ENCODE measurements at regions of chr19 and their contacts with region 1.

Region 1: DNA sequence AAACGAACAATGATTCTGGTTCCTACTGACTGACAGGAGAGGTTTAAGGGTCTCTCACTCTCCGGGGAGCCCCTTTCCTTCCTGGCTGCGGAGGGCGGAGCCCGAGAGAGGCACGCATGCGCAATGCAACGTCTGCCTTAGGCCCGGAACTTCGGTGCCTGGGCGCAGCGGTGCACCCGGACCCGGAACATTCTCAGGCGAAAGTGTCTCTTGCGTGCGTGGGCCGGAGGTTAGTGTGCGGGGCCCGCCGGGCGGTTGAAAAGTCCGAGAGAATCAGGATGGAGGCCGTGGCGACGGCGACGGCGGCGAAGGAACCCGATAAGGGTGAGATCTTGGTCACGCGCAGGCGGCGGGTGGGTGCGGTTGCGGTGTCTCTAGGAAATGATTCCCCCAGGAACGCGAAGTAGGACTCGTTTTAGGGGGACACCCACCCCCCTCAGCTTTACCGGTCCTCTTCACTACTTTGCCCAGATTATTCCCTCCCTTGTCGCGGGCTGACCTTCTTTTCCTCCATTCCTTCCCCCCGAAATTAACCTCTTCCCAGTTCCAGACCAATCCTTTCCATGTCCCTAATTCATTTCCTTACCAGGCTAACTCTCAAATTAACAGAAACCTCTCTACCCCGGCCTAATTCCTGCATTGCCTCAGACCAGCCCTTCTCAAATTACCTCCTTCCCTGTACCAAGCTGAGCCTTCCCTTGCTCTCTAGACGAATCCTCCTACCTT is at the start of gene CCDC97:
- DNase-seq: peak; percentile 86 to 92 (median 89)
- H3K4me3 ChIP-seq: peak within 1 kb of the TSS; percentile 82 to 98
- H3K4me3 Mint-ChIP-seq: peak within 1 kb of the TSS; percentile 96 to 100 (median 97)
- H3K27ac ChIP-seq: peak within 1 kb of the TSS; percentile 92
- H3K27ac Mint-ChIP-seq: peak within 1 kb of the TSS; percentile 97 to 100 (median 99)
- H3K4me1 ChIP-seq: peaks cover 76% of the 10 kb centered on the region
- H3K4me1 Mint-ChIP-seq: peaks cover 43 to 87% (median 68%) of the 10 kb centered on the region in 4 donors
- H3K27me3 ChIP-seq: no peaks in the 10 kb centered on the region
- H3K27me3 Mint-ChIP-seq: no peaks in the 10 kb centered on the region
- total RNA-seq, gene CCDC97: 56.4 to 61.4 TPM

Region 2: GRCh38 chr19:41123716-41124294 is 186.4 kb before region 1 on chr19:
- CTCF ChIA-PET with region 1: no interaction called
- POLR2A ChIA-PET with region 1: interaction called, 3 read pairs
- intact Hi-C with region 1: loop called (anchors 1 kb)
- DNase-seq: no peak
- H3K4me3 ChIP-seq: no peak overlapping the region
- H3K4me3 Mint-ChIP-seq: peak overlapping the region in 1 of 8 donors; percentile 9
- H3K27ac ChIP-seq: no peak overlapping the region
- H3K27ac Mint-ChIP-seq: peak overlapping the region in 6 of 7 donors; percentile 47 to 94 (median 92)
- H3K4me1 ChIP-seq: peaks cover 33% of the 10 kb centered on the region
- H3K4me1 Mint-ChIP-seq: peaks cover 27 to 54% (median 40%) of the 10 kb centered on the region in 4 donors
- H3K27me3 ChIP-seq: no peaks in the 10 kb centered on the region
- H3K27me3 Mint-ChIP-seq: peaks cover 0 to 4% of the 10 kb centered on the region in 2 donors

Region 3: DNA sequence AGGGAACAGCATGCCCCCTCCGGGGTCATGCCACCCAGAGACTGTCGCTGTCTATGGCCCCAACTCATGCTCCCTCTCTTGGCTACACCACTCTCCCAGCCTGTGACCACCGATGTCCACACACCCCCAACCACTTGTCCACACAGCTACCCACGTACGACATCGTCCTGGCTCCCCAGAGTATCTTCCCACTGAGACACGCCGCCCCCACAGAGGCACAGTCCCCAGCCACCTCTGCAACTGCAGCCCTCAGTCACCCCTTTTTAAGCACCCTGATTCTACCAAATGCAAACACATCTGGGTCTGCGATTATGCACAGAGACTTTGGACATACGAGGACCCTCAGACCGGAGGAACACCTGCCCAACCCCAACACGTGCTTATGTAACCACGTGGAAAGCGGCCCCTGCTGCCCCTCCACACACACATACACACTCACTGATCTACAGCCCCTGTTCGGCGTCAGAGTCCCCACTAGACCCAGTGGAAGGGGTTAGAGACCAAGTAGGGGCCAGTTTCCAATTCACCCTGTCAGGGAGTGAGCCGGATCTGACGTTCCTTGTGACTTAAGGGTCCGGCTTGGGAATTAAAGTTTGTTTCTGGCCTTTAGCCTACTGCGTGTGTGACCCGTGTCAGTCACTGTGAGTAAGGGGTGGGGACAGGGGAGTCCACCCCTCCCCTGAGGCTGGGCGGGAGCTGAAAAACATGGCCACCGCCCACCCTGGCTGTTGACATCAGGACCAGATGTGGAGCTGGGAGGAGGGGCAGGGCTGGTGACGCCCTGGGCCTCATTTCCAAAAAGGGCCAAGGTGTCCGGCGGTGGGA is 103.1 kb before region 1 on chr19:
- CTCF ChIA-PET with region 1: interaction called, 101 read pairs
- POLR2A ChIA-PET with region 1: interaction called, 108 read pairs
- intact Hi-C with region 1: loop called (anchors 1 kb)
- DNase-seq: no peak
- H3K4me3 ChIP-seq: no peak overlapping the region
- H3K4me3 Mint-ChIP-seq: no peak overlapping the region
- H3K27ac ChIP-seq: no peak overlapping the region
- H3K27ac Mint-ChIP-seq: peak overlapping the region in 2 of 7 donors; percentile 76 to 78
- H3K4me1 ChIP-seq: no peaks in the 10 kb centered on the region
- H3K4me1 Mint-ChIP-seq: peaks cover 3 to 11% (median 9%) of the 10 kb centered on the region in 4 donors
- H3K27me3 ChIP-seq: no peaks in the 10 kb centered on the region
- H3K27me3 Mint-ChIP-seq: peaks cover 0 to 3% of the 10 kb centered on the region in 2 donors

Region 4: GRCh38 chr19:41298348-41298964 is 11.7 kb before region 1 on chr19:
- CTCF ChIA-PET with region 1: interaction called, 54 read pairs
- POLR2A ChIA-PET with region 1: interaction called, 81 read pairs
- intact Hi-C with region 1: loop called (anchors 1 kb)
- DNase-seq: peak; percentile 47 to 80 (median 56)
- H3K4me3 ChIP-seq: no peak overlapping the region
- H3K4me3 Mint-ChIP-seq: peak overlapping the region in 7 of 8 donors; percentile 59 to 85 (median 70)
- H3K27ac ChIP-seq: peak overlapping the region; percentile 76
- H3K27ac Mint-ChIP-seq: peak overlapping the region; percentile 95 to 100 (median 99)
- H3K4me1 ChIP-seq: peaks cover 85% of the 10 kb centered on the region
- H3K4me1 Mint-ChIP-seq: peaks cover 72 to 92% (median 82%) of the 10 kb centered on the region in 4 donors
- H3K27me3 ChIP-seq: no peaks in the 10 kb centered on the region
- H3K27me3 Mint-ChIP-seq: no peaks in the 10 kb centered on the region

Region 5: DNA sequence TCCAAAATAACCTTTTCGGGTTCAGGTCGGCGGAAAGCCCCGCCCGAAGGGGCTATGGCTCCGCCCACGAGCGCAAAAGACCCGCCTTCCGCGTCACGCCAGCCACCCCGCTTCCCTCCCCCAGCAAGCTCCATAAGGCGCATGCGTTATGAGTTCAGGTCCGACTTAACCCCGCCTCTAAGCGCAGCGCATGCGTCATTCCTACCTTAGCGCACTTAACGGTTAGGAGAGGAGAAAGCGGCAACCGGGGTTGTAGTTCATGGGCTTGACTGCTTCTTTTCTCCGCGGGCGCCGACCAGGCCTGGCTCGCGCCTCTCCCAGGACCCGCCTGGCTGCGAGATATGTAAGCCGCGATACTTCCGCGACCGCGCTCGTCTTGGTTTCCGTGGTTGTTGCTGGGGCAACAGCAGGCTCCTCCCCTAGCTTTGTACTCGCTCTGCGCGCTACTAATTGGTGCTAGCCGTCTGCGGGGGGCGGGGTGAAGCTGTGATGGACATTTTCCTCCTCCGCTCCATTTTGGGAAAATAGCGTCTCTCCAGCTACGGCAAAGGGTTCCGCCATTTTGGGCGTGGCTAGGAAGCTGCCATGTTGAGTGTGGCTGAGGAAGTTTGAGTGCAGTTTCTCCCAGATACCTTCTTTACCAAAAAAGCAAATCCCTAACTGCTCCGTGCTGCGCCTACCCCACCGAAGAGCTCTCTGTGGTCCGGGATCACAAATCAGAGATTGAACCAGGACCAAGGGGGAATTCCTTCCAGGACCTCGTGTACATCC is 53.7 kb after region 1 on chr19 and contains the start of gene B9D2:
- CTCF ChIA-PET with region 1: interaction called, 6 read pairs
- POLR2A ChIA-PET with region 1: interaction called, 273 read pairs
- intact Hi-C with region 1: no loop called
- DNase-seq: peak; percentile 98 to 99 (median 99)
- H3K4me3 ChIP-seq: peak within 1 kb of the TSS; percentile 77 to 91
- H3K4me3 Mint-ChIP-seq: peak within 1 kb of the TSS; percentile 93 to 98 (median 95)
- H3K27ac ChIP-seq: peak within 1 kb of the TSS; percentile 99
- H3K27ac Mint-ChIP-seq: peak within 1 kb of the TSS; percentile 97 to 100 (median 100)
- H3K4me1 ChIP-seq: peaks cover 24% of the 10 kb centered on the region
- H3K4me1 Mint-ChIP-seq: peaks cover 15 to 45% (median 23%) of the 10 kb centered on the region in 4 donors
- H3K27me3 ChIP-seq: no peaks in the 10 kb centered on the region
- H3K27me3 Mint-ChIP-seq: no peaks in the 10 kb centered on the region
- total RNA-seq, gene B9D2: 11.6 to 15.2 TPM

Region 6: DNA sequence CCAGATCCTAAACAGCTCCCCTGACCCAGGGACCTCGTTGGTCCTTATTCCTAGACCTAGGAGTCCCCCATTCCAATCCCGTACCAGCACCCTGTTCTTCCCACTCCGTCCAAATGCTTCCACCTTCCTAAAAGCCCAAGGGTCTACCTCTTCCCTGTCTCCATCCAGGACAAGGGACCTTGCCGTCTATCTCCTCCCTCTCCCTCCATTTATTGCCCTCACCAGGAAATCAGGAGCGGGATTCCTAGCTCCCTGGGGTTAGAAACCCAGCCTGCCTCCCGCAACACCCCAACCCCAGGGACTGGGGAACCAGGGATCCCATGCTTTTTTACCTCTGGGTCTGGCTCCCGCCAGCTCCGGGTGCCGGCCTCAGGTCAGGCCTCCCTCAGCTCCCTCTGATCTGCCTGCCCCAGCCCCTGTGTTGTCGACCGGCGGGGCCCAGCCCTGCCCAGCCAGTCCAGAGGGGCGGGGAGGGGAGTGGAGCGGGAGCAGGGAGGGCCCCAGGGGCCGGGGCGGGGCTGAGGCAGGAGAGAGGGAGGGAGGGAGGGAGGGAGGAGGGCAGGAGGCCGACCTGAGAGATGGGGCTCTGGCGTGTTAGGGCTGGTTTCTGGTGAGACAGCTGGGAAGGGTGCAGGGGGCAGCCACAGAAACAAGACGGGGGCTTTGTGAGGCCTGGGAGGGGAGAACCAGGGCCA is 116.9 kb after region 1 on chr19 and contains the start of gene B3GNT8:
- CTCF ChIA-PET with region 1: interaction called, 5 read pairs
- POLR2A ChIA-PET with region 1: interaction called, 13 read pairs
- intact Hi-C with region 1: no loop called
- DNase-seq: peak; percentile 16 to 52 (median 32)
- H3K4me3 ChIP-seq: peak within 1 kb of the TSS; percentile 33 to 34
- H3K4me3 Mint-ChIP-seq: peak within 1 kb of the TSS; percentile 90 to 98 (median 92)
- H3K27ac ChIP-seq: peak within 1 kb of the TSS; percentile 68
- H3K27ac Mint-ChIP-seq: peak within 1 kb of the TSS; percentile 91 to 98 (median 96)
- H3K4me1 ChIP-seq: peaks cover 39% of the 10 kb centered on the region
- H3K4me1 Mint-ChIP-seq: peaks cover 15 to 51% (median 34%) of the 10 kb centered on the region in 4 donors
- H3K27me3 ChIP-seq: no peaks in the 10 kb centered on the region
- H3K27me3 Mint-ChIP-seq: no peaks in the 10 kb centered on the region
- total RNA-seq, gene B3GNT8: 2.9 to 3.2 TPM

Region 7: DNA sequence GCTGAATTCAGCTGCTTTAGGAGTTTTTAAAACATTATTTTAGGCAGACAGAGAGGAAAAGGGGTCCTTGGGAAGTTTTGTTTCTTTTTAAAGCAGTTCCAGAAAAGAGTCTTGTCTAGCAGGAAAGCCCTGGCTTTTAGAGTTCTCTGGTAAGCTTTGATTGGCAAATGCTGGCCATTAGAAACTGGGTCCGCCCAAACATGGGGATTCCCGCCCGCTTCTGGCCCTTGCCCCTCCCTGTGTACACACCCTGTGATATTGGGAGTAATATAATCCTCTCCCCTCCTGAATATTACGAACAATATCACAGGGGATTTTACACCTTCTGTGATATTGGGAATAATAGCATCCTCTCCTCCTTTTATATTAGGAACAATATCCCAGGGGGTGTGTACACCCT is 191.7 kb after region 1 on chr19:
- CTCF ChIA-PET with region 1: no interaction called
- POLR2A ChIA-PET with region 1: no interaction called
- intact Hi-C with region 1: no loop called
- DNase-seq: no peak
- H3K4me3 ChIP-seq: no peak overlapping the region
- H3K4me3 Mint-ChIP-seq: no peak overlapping the region
- H3K27ac ChIP-seq: no peak overlapping the region
- H3K27ac Mint-ChIP-seq: no peak overlapping the region
- H3K4me1 ChIP-seq: no peaks in the 10 kb centered on the region
- H3K4me1 Mint-ChIP-seq: peaks cover 0 to 4% (median 2%) of the 10 kb centered on the region in 4 donors
- H3K27me3 ChIP-seq: peaks cover 4% of the 10 kb centered on the region
- H3K27me3 Mint-ChIP-seq: peaks cover 26 to 34% of the 10 kb centered on the region in 2 donors

Region 8: GRCh38 chr19:41521931-41522555 is 211.8 kb after region 1 on chr19:
- CTCF ChIA-PET with region 1: no interaction called
- POLR2A ChIA-PET with region 1: no interaction called
- intact Hi-C with region 1: no loop called
- DNase-seq: peak; percentile 40 to 58 (median 43)
- H3K4me3 ChIP-seq: peak overlapping the region in 1 of 2 donors; percentile 50
- H3K4me3 Mint-ChIP-seq: peak overlapping the region; percentile 82 to 96 (median 90)
- H3K27ac ChIP-seq: peak overlapping the region; percentile 46
- H3K27ac Mint-ChIP-seq: peak overlapping the region; percentile 78 to 95 (median 94)
- H3K4me1 ChIP-seq: peaks cover 13% of the 10 kb centered on the region
- H3K4me1 Mint-ChIP-seq: peaks cover 15 to 28% (median 18%) of the 10 kb centered on the region in 4 donors
- H3K27me3 ChIP-seq: peaks cover 3% of the 10 kb centered on the region
- H3K27me3 Mint-ChIP-seq: peaks cover 5 to 28% of the 10 kb centered on the region in 2 donors

Measured in CD4-positive, alpha-beta memory T cell (primary cell).